ENCODE measurements at regions of chr2 and their contacts with region 1.

Region 1: DNA sequence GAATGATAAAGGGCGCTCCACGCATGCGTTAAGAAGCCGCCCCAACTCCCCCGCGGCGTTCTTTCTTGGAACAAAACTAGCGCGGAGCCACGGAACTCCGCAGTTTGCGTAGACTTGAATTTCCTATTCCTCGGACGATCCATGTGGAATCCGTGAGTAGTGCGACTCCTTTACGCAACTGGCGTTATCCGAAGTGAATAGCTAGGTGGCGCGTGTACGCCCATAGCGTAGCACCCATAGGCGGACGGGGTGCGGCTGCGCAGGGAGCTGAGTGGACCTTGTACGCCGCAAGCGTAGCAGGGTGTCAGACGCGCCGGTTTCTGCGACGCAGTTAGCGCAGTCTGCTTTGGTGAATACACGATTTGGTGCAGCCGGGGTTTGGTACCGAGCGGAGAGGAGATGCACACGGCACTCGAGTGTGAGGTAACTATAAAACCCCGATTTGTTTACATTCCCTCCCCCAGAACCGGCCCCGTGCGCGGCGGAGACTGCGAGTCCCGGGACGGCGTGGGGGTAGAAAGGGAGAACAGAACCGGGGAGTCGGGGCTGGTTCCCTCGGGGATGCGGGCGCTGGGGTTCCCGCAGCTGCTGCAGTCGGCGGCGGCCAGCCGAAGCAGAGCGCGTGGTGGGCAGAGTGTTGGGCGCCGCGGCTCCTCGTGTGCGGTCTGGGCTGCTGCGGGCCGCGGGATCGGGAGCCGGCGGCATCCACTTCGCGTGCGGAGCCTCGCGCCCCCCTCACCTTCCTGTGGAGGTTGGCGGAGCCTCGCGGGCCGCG is at the start of gene SLC39A10:
- DNase-seq: peak; percentile 98
- ATAC-seq: peak; percentile 89
- H3K4me3 Mint-ChIP-seq: peak within 1 kb of the TSS; percentile 95
- H3K27ac Mint-ChIP-seq: peak within 1 kb of the TSS; percentile 100
- H3K4me1 Mint-ChIP-seq: peaks cover 20% of the 10 kb centered on the region
- H3K27me3 Mint-ChIP-seq: no peaks in the 10 kb centered on the region
- CTCF ChIP-seq: no peak
- total RNA-seq, gene SLC39A10: 25.6 to 25.8 TPM

Region 2: GRCh38 chr2:195486987-195487644 is 169.9 kb before region 1 on chr2:
- CTCF ChIA-PET with region 1: interaction called, 8 read pairs
- POLR2A ChIA-PET with region 1: no interaction called
- intact Hi-C with region 1: loop called (anchors 5 kb)
- DNase-seq: peak; percentile 35
- ATAC-seq: peak; percentile 86
- H3K4me3 Mint-ChIP-seq: peak overlapping the region; percentile 18
- H3K27ac Mint-ChIP-seq: peak overlapping the region; percentile 70
- H3K4me1 Mint-ChIP-seq: peaks cover 20% of the 10 kb centered on the region
- H3K27me3 Mint-ChIP-seq: no peaks in the 10 kb centered on the region
- CTCF ChIP-seq: no peak

Region 3: DNA sequence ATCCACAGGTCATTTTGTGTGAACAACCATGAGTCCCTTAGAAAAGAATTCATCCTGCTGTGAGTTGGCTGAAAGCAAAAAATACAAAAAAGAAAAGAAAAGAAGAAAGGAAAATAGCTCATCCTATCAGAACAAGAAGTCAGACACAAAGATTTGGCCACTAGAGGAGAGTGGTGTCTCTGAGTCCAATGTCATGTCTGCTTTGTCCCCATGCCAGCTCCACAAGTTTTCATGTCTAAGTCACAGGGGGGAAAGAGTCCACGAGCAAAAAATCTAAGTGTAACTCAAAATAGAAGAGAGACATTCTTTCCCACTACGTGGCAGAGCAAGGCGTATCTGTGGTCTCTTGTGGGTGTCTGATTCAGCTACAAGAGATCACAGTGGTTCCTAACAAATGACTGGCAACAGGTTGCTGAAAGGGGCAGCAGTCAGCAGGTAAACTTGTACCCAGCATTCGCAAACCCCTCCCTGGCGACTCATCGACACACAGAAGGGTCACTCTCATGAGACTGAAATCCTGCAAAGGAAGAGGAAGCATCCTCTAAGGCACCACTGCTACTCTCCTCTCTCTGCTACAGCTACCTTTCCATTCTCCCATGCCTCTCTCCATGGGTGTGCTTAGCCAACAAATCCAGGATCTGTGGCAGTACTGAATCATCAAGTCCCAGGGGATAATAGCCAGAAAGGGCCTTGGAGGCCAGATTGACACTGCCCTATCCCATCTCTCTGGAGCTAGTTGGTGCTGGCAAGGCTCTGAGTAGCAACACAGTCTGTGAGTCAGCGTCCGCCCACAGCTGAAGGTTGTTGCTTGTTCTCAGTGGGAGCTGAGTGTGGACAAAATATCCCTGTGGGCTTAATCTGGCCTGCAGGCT is 123.0 kb before region 1 on chr2:
- CTCF ChIA-PET with region 1: interaction called, 28 read pairs
- POLR2A ChIA-PET with region 1: interaction called, 64 read pairs
- intact Hi-C with region 1: loop called (anchors 1 kb)
- DNase-seq: peak; percentile 86
- ATAC-seq: peak; percentile 72
- H3K4me3 Mint-ChIP-seq: peak overlapping the region; percentile 81
- H3K27ac Mint-ChIP-seq: peak overlapping the region; percentile 95
- H3K4me1 Mint-ChIP-seq: peaks cover 82% of the 10 kb centered on the region
- H3K27me3 Mint-ChIP-seq: no peaks in the 10 kb centered on the region
- CTCF ChIP-seq: peak; percentile 22

Region 4: DNA sequence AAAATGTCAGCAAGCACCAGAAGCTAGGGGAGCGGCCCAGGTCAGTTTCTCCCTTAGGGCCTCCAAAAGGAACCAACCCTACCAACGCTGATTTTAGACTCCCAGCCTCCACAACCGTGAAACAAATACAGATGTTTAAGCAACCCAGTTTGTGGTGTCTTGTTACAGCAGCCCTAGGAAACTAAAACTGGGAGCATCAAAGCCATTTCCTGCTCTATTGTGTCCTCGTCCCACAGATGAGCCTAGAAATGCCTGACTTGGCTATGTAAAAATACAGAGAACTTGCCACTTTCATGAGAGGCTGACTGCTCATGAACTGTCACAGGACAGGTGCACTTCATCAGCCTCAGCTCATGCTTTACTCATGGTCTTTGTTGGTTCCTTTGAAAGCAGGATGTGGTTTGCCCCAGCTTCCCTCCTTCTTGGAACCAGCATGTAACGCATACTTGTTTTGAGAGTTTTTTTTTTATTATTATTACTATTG is 97.6 kb before region 1 on chr2:
- CTCF ChIA-PET with region 1: interaction called, 12 read pairs
- POLR2A ChIA-PET with region 1: interaction called, 37 read pairs
- intact Hi-C with region 1: loop called (anchors 5 kb)
- DNase-seq: peak; percentile 92
- ATAC-seq: peak; percentile 84
- H3K4me3 Mint-ChIP-seq: peak overlapping the region; percentile 54
- H3K27ac Mint-ChIP-seq: peak overlapping the region; percentile 97
- H3K4me1 Mint-ChIP-seq: peaks cover 62% of the 10 kb centered on the region
- H3K27me3 Mint-ChIP-seq: no peaks in the 10 kb centered on the region
- CTCF ChIP-seq: no peak

Region 5: DNA sequence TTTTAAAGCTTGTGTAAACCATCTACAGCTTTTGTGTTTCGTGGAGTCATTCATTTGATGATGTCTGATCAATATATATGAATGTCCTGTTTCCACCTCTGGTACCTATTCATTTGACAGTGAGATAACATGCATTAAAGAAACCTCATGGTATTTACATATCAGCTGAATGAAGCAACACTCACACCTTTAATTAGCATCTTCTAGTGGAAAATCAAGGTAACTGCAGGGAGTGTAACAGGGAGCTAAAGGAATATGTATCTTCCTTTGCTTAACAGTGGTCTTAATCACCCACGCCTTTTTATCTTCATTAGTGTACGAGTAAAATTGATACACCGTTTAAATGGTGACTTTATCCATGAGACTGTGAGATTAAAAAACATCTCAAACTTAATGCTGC is 15.6 kb after region 1 on chr2:
- CTCF ChIA-PET with region 1: interaction called, 25 read pairs
- POLR2A ChIA-PET with region 1: interaction called, 4 read pairs
- intact Hi-C with region 1: no loop called
- DNase-seq: no peak
- ATAC-seq: peak; percentile 47
- H3K4me3 Mint-ChIP-seq: no peak overlapping the region
- H3K27ac Mint-ChIP-seq: no peak overlapping the region
- H3K4me1 Mint-ChIP-seq: peaks cover 19% of the 10 kb centered on the region
- H3K27me3 Mint-ChIP-seq: no peaks in the 10 kb centered on the region
- CTCF ChIP-seq: no peak